ENCODE measurements at regions of chr2 and their contacts with region 1.

Region 1: DNA sequence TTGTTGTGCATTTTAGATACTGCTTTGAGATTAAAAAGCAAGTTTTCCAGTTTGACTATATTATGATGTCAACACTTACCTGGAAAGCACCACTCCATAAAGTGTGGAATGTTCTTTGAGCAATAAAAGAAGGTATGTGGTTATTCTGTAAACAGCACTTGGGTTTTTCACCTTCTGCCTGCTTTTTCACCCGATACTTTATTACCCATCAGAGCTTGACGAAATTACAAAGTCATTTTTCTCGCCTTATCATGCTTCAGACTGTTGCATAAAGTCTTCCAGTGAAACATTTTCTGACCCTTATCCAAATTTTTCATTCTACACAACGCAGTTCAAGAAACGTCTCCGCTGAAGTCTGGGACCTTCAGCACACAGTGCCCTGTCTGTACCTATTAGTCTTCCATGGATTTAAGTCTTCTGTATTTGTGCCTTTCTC is 25.2 kb downstream of the CAB39 start:
- DNase-seq: no peak
- H3K4me3 Mint-ChIP-seq: peak overlapping the region; percentile 37
- H3K27ac Mint-ChIP-seq: peak overlapping the region; percentile 64
- H3K4me1 Mint-ChIP-seq: peaks cover 82% of the 10 kb centered on the region
- H3K27me3 Mint-ChIP-seq: no peaks in the 10 kb centered on the region

Region 2: DNA sequence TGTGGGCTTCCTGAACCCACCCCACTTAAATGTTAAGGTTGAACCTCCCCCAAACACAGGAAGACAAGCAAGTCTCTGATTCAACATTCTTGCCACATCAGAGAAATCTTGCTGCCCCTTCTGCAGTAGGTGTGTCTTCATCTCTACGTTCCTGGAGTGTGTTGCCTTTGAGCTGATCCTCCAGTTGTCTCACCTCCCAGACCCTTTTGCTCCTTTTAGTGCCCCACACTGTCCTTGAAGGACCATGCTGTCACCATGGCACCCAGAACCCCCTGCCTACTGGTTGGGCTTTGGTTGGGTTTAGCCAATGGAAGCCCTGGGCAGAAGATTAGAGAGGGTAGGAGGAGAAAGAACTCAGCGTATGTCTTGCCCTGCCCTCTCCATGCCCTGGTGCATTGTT is 14.4 kb before region 1 on chr2:
- intact Hi-C with region 1: loop called (anchors 1 kb)
- DNase-seq: peak; percentile 30
- H3K4me3 Mint-ChIP-seq: peak overlapping the region; percentile 77
- H3K27ac Mint-ChIP-seq: peak overlapping the region; percentile 79
- H3K4me1 Mint-ChIP-seq: peaks cover 66% of the 10 kb centered on the region
- H3K27me3 Mint-ChIP-seq: no peaks in the 10 kb centered on the region

Region 3: GRCh38 chr2:230781130-230781797 is 43.5 kb after region 1 on chr2:
- intact Hi-C with region 1: loop called (anchors 2 kb)
- DNase-seq: peak; percentile 47
- H3K4me3 Mint-ChIP-seq: peak overlapping the region; percentile 30
- H3K27ac Mint-ChIP-seq: peak overlapping the region; percentile 75
- H3K4me1 Mint-ChIP-seq: peaks cover 73% of the 10 kb centered on the region
- H3K27me3 Mint-ChIP-seq: no peaks in the 10 kb centered on the region